ENCODE measurements at regions of chr13 and their contacts with region 1.

Region 1: GRCh38 chr13:41061075-41061913 is at the start of gene WBP4:
- DNase-seq: peak; percentile 90
- H3K4me3 ChIP-seq: peak within 1 kb of the TSS; percentile 88 to 91
- H3K27ac ChIP-seq: peak within 1 kb of the TSS; percentile 96 to 99
- H3K4me1 ChIP-seq: peaks cover 8 to 12% of the 10 kb centered on the region in 2 experiments; a peak in 3 of 4 replicates
- H3K27me3 ChIP-seq: no peaks in the 10 kb centered on the region
- CTCF ChIP-seq: no peak; the same call in 1 of the 2 replicates
- EP300 ChIP-seq: 0 out of 4 replicates have a peak, but pooled peaks of 1 of the 2 experiments have one; percentile 13
- RAD21 ChIP-seq: no peak
- polyA plus RNA-seq, gene WBP4: 6.4 and 6.8 TPM in 2 replicates

Region 2: DNA sequence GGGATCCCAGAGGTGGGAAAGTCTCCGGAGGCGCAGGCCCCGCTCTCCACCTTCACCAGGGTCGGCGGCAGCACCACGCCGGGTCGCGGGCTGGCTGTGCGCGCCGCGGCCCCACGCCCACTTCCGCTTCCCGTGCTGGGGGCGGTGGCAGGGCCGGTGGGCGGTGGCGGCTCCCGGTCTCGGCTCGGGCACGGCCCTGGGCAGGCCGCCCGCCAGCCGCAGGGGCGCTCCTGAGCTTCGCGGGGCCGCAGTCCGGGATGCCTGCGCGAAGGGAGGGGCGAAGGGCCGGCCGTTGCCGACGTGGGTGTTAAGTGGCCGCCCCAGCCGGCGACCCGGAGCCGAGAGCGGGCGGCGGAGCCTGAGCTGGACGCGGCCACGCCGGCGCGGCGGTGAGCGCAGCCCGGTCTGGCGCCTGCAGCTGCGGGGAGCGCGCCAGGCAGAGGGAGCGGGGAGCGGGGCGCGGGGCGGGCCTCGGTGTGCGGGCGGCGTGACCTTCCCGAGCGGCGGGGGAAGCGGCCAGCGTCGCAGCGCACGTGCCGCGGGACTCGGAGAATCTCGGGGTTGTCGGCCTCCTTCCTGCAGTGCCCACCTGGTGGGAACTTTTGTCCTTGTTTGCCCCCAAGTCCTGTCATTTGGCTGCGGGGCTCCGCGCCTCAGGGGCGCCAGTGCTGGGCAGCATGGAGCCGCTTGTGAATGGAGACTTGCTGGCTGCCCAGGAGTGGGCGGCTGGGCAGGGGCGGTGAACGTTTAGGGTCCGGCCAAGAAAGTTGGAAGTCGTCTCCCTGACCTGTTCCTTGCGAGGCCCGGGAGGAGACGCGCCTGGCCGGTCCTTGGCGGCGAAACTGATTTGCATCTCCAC is 271.8 kb before region 1 on chr13 and contains the start of gene SLC25A15:
- CTCF ChIA-PET with region 1: interaction called, 14 read pairs
- POLR2A ChIA-PET with region 1: interaction called, 4 read pairs
- DNase-seq: peak; percentile 97
- H3K4me3 ChIP-seq: peak within 1 kb of the TSS; percentile 70 to 83
- H3K27ac ChIP-seq: peak within 1 kb of the TSS; percentile 83 to 85
- H3K4me1 ChIP-seq: peaks cover 0 to 11% of the 10 kb centered on the region in 2 experiments; a peak in 1 of 4 replicates
- H3K27me3 ChIP-seq: no peaks in the 10 kb centered on the region
- CTCF ChIP-seq: no peak; the same call in 1 of the 2 replicates
- EP300 ChIP-seq: no peak
- RAD21 ChIP-seq: peak; percentile 60
- polyA plus RNA-seq, gene SLC25A15: 15.2 TPM in 2 replicates

Region 3: DNA sequence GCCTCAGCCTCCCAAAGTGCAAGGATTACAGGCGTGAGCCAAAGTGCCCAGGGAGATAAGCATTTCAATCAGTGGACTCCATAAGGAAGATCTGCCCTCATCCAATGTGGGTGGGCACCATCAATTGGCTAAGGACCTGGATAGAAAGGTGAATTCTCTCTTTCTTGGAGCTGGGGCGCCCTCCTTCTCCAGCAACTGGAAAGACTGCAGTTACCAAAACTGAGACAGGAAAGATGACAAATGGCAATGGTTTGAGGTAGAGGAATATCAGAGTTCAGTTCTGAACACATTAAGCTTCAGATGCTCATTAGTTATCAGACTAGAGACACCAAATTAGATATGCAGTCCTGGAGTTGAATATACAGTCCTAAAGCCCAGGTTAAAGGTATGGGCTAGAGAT is 31.7 kb before region 1 on chr13:
- CTCF ChIA-PET with region 1: no interaction called
- POLR2A ChIA-PET with region 1: no interaction called
- DNase-seq: no peak
- H3K4me3 ChIP-seq: no peak overlapping the region
- H3K27ac ChIP-seq: no peak overlapping the region
- H3K4me1 ChIP-seq: no peaks in the 10 kb centered on the region
- H3K27me3 ChIP-seq: no peaks in the 10 kb centered on the region
- CTCF ChIP-seq: no peak
- EP300 ChIP-seq: no peak
- RAD21 ChIP-seq: peak; percentile 36